Colonic mucosa (tissue), 4 donors: ENCODE measurements at regions of chr3 and their contacts with region 1.

Region 1: DNA sequence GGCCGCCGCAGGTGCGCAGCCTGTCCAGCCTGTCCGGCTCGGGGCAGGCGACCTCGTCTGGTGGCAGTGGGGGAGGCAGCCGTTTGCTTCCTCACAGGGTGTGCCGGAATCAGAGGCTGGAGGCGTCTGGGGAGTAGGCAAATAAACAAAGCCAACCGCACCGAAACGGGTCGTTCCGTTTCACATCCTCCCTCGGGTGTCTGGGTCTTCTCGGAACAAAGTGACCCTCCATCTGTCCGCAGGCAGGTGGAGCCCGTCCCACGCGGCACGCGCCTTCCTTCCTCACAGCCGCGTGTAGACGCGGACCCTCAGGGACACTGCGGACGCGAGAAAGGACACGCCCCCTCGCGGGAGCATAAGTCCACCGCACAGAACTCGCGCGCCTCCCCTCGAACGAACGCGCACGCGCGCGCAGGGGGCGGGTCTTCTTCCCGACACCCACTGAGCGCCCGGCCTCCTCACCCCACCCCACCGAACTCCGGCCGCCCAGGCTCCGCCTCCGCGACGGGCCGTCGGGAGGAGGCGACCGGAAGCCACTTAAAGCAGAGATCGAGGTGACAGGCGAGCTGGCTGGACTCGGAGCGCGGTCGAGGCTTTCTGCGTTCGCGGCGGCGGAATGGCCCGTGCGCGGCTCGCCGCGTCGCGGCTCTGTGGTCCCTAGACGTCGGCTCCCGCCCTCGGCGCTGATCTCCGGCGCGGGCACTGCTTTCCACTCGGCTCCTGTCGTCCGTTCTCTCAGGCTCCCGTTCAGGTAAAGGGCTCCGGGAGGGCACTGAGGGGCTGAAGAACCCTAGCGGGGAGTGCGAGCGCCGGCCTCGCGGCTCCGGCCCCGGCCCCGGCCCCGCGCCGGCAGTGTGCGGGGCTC is at the start of gene TIPARP:
- DNase-seq: peak; percentile 100
- H3K4me3 ChIP-seq: peak within 1 kb of the TSS; percentile 90
- H3K27ac ChIP-seq: peak within 1 kb of the TSS; percentile 99
- H3K4me1 ChIP-seq: peaks cover 9% of the 10 kb centered on the region
- H3K27me3 ChIP-seq: no peaks in the 10 kb centered on the region
- CTCF ChIP-seq: peak; percentile 85
- total RNA-seq, gene TIPARP: 15.2 to 30.2 TPM

Region 2: DNA sequence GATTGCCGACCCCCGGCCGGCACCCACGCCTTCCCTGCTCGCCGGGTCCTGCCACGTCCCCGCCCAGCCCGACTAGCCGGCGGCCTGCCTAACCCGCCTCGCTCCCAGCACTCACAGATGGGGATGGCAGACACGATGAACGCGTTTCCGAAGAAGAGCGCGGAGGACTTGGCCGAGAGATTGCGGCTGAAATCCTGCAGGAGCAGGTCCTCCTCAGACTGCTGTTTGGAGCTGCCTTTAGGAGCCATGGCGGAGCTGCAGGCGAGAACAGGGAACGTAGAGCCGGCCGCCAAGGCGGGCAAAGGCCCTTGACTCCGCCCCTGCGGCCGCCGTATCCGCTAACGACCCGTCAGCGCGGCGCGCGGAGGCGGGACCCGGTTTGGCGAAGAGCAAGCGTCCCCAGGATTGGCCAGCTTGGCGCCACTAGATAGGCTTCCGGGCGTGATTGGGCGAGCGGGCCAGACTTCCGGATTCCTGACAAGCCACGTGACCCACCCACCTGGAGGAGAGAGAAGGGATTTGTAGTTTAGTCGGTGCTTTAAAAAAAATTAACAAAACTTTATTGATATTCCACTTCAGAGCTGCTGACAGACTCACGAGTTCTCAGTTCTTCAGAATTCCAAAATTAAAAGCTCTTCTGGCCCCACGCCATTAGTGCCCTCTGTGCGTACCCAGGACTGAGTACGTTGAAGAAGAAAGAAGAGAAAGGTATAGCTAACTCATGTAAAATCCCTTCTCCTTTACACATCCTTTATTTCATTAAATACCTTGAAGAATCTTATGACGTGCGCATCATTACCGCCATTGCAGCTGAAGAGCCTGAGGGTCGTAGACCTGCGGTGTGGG is 119.2 kb before region 1 on chr3 and contains the start of gene SSR3:
- intact Hi-C with region 1: loop called (anchors 5 kb)
- DNase-seq: peak; percentile 99
- H3K4me3 ChIP-seq: peak within 1 kb of the TSS; percentile 87
- H3K27ac ChIP-seq: peak within 1 kb of the TSS; percentile 73
- H3K4me1 ChIP-seq: no peaks in the 10 kb centered on the region
- H3K27me3 ChIP-seq: no peaks in the 10 kb centered on the region
- CTCF ChIP-seq: no peak
- total RNA-seq, gene SSR3: 134 to 171 TPM

Region 3: GRCh38 chr3:156826144-156826895 is 152.0 kb after region 1 on chr3 and contains the start of gene LEKR1:
- intact Hi-C with region 1: loop called (anchors 5 kb)
- DNase-seq: peak; percentile 87
- H3K4me3 ChIP-seq: peak within 1 kb of the TSS; percentile 69
- H3K27ac ChIP-seq: peak within 1 kb of the TSS; percentile 97
- H3K4me1 ChIP-seq: no peaks in the 10 kb centered on the region
- H3K27me3 ChIP-seq: no peaks in the 10 kb centered on the region
- CTCF ChIP-seq: no peak
- total RNA-seq, gene LEKR1: 1.6 to 2.0 TPM

Region 4: DNA sequence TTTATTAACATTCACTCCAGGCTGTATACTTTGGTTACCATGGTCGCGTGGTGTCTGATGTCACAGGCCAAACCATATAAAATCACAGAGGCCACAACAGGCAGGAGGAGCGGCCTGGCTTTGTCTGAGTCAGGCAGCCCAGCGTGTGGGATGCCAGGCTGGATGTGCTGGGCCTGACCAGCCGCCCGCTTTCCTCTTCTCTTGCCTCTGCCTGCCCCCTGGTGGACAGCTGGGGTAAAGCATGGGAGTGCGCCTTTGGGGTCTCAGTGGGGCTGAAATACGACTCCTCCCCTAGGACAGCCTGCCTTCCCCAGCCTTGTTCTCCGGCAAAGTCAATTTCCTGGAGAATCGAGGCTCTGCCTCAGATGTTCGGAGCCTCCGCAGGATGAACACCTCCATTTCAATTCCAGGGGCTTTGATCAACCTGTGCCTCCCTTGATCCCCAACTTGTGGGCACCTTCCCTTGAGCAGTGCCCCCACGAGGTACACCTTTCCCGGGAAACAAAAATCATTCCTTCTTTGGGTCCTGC is 407.5 kb after region 1 on chr3:
- intact Hi-C with region 1: loop called (anchors 2 kb)
- DNase-seq: peak; percentile 94
- H3K4me3 ChIP-seq: no peak overlapping the region
- H3K27ac ChIP-seq: no peak overlapping the region
- H3K4me1 ChIP-seq: no peaks in the 10 kb centered on the region
- H3K27me3 ChIP-seq: no peaks in the 10 kb centered on the region
- CTCF ChIP-seq: peak; percentile 96

Region 5: GRCh38 chr3:157136647-157137387 is 462.5 kb after region 1 on chr3:
- intact Hi-C with region 1: loop called (anchors 5 kb)
- DNase-seq: peak; percentile 84
- H3K4me3 ChIP-seq: no peak overlapping the region
- H3K27ac ChIP-seq: peak overlapping the region; percentile 72
- H3K4me1 ChIP-seq: peaks cover 15% of the 10 kb centered on the region
- H3K27me3 ChIP-seq: no peaks in the 10 kb centered on the region
- CTCF ChIP-seq: no peak